Posterior vena cava (tissue), 2 donors: ENCODE measurements at regions of chrX and their contacts with region 1.

Region 1: DNA sequence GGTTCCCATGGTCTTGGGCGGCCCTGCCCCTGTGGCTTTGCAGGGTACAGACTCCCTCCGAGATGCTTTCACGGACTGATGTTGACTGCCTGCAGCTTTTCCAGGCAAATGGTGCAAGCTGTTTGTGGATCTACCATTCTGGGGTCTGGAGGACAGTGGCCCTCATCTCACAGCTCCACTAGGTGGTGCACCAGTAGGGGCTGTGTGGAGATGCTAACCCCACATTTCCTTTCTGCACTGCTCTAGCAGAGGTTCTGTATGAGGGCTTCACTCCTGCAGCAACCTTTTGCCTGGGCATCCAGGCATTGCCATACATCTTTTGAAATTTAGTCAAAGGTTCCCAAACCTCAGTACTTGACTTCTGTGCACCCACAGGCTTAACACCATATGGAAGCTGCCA is 176.1 kb downstream of the DCAF12L1 start:
- DNase-seq: no peak

Region 2: DNA sequence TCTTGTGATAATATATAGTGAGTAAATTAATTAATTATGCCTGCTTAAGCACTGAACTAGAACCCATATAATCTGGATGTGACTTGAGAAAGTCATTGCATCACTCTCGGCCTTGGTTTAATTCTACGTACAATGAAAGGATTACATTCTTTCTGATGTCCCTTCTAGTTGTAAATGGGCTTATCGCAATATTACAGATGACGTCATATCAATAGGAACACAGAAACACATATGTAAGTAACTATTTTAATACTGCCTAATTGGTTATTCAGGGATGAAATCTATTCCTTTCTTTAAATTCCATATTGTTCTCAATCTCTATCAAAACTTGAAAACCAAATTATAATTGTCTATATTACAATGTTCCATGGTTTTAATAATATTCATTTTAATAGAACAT is 947.7 kb after region 1 on chrX:
- intact Hi-C with region 1: loop called in 1 of 2 experiments (anchors 5 kb)
- DNase-seq: no peak